Panc1 (cell line): ENCODE measurements at regions of chr10 and their contacts with region 1.

Region 1: GRCh38 chr10:44950326-44951225 is 9.0 kb upstream of the RASSF4 start:
- DNase-seq: no peak
- ATAC-seq: peak; percentile 31; the same call in 1 of the 2 replicates
- H3K4me3 ChIP-seq: no peak overlapping the region
- H3K27ac ChIP-seq: no peak overlapping the region
- H3K4me1 ChIP-seq: peaks cover 4% of the 10 kb centered on the region; the same call in 1 of the 2 replicates
- H3K27me3 ChIP-seq: no peaks in the 10 kb centered on the region
- CTCF ChIP-seq: no peak

Region 2: DNA sequence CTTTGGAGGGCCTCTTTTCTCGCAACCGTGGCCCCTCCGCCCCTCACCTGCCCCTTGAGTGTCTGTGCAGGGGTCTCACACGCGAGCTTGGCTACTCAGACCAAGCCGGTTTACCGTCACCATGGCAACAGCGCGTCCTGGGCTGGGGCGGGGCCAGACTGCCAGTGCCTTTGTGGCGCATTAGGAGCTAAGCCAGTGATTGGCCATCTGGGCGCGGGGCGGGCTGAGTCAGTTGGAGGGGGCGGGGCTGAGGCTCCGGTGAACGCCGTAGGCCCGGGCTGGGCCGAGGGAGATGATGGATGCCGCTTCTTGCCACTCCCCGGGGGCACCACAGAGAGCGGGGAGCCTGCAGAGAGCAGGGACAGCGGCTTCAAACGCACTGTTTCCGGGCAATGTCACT is 1627.8 kb before region 1 on chr10:
- CTCF ChIA-PET with region 1: no interaction called
- POLR2A ChIA-PET with region 1: interaction called, 13 read pairs
- in situ Hi-C with region 1: no loop called
- intact Hi-C with region 1: no loop called
- DNase-seq: no peak
- ATAC-seq: peak; percentile 86
- H3K4me3 ChIP-seq: peak overlapping the region in 1 of 2 experiments; percentile 26; a peak in 1 of 4 replicates
- H3K27ac ChIP-seq: no peak overlapping the region
- H3K4me1 ChIP-seq: no peaks in the 10 kb centered on the region
- H3K27me3 ChIP-seq: no peaks in the 10 kb centered on the region; the same call in 1 of the 2 replicates
- CTCF ChIP-seq: no peak

Region 3: DNA sequence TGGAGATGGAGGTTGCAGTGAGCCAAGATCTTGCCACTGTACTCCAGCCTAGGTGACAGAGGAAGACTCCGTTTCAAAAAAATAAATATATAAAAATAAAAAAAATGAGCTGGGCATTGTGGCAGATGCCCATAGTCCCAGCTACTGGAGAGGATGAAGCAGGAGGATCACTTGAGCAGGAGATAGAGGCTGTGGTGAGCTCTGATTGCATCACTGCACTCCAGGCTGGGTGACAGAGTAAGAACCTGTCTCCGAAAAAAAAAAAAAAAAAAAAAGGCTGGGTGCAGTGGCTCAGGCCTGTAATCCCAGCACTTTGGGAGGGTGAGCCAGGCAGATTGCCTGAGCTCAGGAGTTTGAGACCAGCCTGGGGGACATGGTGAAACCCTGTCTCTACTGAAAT is 1501.8 kb before region 1 on chr10:
- CTCF ChIA-PET with region 1: no interaction called
- POLR2A ChIA-PET with region 1: interaction called, 11 read pairs
- in situ Hi-C with region 1: no loop called
- intact Hi-C with region 1: no loop called
- DNase-seq: no peak
- ATAC-seq: no peak
- H3K4me3 ChIP-seq: no peak overlapping the region
- H3K27ac ChIP-seq: no peak overlapping the region
- H3K4me1 ChIP-seq: peaks cover 3% of the 10 kb centered on the region; the same call in 1 of the 2 replicates
- H3K27me3 ChIP-seq: no peaks in the 10 kb centered on the region
- CTCF ChIP-seq: no peak

Region 4: GRCh38 chr10:45160271-45160670 is 209.7 kb after region 1 on chr10:
- CTCF ChIA-PET with region 1: no interaction called
- POLR2A ChIA-PET with region 1: no interaction called
- in situ Hi-C with region 1: no loop called
- intact Hi-C with region 1: no loop called
- DNase-seq: no peak
- ATAC-seq: no peak
- H3K4me3 ChIP-seq: no peak overlapping the region
- H3K27ac ChIP-seq: no peak overlapping the region
- H3K4me1 ChIP-seq: no peaks in the 10 kb centered on the region
- H3K27me3 ChIP-seq: peaks cover 8% of the 10 kb centered on the region
- CTCF ChIP-seq: no peak